Activated CD4-positive, alpha-beta T cell treated with anti-CD3 and anti-CD28 coated beads for 36 hours (primary cell): ENCODE measurements at regions of chr12 and their contacts with region 1.

Region 1: GRCh38 chr12:44847888-44848702 is 28.0 kb downstream of the NELL2 start:
- DNase-seq: peak; percentile 78
- ATAC-seq: peak; percentile 86
- H3K4me3 Mint-ChIP-seq: peak overlapping the region; percentile 59
- H3K27ac Mint-ChIP-seq: peak overlapping the region; percentile 96
- H3K4me1 Mint-ChIP-seq: peaks cover 80% of the 10 kb centered on the region
- H3K27me3 Mint-ChIP-seq: no peaks in the 10 kb centered on the region

Region 2: DNA sequence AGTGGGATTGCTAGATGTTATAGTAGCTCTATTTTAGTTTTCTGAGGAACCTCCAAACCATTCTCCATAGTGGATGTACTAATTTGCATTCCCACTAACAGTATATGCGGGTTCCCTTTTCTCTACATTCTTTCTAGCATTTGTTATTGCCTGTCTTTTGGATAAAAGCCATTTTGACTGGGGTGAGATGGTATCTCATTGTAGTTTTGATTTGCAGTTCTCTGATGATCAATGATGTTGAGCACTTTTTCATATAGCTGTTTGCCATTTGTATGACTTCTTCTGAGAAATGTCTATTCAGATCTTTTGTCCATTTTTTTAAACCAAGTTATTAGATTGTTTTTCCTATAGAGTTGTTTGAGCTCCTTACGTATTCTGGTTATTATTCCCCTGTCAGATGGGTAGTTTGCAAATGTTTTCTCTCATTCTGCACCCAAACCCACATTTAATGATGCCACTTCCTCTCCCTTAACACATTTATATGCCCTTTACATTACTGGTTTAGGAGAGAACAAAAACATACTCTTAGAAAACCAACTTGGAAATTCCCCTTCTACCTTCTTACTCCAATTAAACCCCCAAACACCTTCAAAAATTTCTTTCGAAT is 20.2 kb before region 1 on chr12:
- CTCF ChIA-PET with region 1: interaction called, 6 read pairs
- POLR2A ChIA-PET with region 1: no interaction called
- intact Hi-C with region 1: loop called (anchors 1 kb)
- DNase-seq: no peak
- ATAC-seq: peak; percentile 86
- H3K4me3 Mint-ChIP-seq: peak overlapping the region; percentile 42
- H3K27ac Mint-ChIP-seq: peak overlapping the region; percentile 89
- H3K4me1 Mint-ChIP-seq: peaks cover 59% of the 10 kb centered on the region
- H3K27me3 Mint-ChIP-seq: no peaks in the 10 kb centered on the region

Region 3: DNA sequence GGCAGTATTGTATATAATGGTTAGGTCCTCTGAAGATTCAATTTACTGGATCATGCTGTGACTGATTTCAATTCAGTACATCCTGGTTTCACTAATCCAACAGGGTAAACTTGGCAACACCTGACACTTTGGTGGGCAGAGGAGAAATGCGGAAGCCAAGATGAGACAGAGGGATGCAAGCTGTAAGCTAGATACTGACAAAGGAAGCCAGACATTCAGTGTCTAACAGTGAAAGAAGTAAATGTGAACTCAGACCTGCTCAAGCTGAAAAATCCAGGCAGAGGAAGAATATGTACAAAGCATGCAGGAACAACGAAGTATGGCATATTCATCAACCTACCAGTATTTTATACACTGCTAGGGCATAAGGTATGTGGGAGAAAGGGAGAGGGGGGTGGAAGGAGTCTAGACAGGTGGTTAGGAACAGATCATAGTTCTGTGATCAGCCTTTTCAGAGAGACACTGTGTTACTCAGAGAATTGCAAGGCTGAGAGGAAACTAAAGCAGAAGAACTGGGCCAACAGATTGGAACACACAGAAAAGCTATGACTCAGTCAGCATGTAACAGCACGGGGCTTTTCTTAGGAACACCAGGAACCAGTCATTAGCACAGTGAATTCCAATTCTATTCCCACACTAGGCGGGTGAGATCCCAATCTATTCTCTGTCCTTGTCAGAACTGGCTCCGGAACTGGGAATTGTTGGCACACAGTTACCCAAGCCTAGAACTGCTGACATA is 12.3 kb before region 1 on chr12:
- CTCF ChIA-PET with region 1: interaction called, 8 read pairs
- POLR2A ChIA-PET with region 1: interaction called, 3 read pairs
- intact Hi-C with region 1: loop called in 1 of 2 experiments (anchors 1 kb)
- DNase-seq: peak; percentile 25
- ATAC-seq: peak; percentile 88
- H3K4me3 Mint-ChIP-seq: peak overlapping the region; percentile 60
- H3K27ac Mint-ChIP-seq: peak overlapping the region; percentile 94
- H3K4me1 Mint-ChIP-seq: peaks cover 84% of the 10 kb centered on the region
- H3K27me3 Mint-ChIP-seq: no peaks in the 10 kb centered on the region